H1 (cell line): ENCODE measurements at regions of chr21 and their contacts with region 1.

Region 1: GRCh38 chr21:45309069-45309986 is 21.6 kb upstream of the POFUT2 start:
- DNase-seq: peak; percentile 39 to 95
- H3K4me3 ChIP-seq: no peak overlapping the region
- H3K27ac ChIP-seq: no peak overlapping the region
- H3K4me1 ChIP-seq: peaks cover 0 to 3% (median 1%) of the 10 kb centered on the region in 4 experiments; a peak in 4 of 7 replicates
- H3K27me3 ChIP-seq: peaks cover 0 to 3% (median 0%) of the 10 kb centered on the region in 4 experiments; a peak in 3 of 7 replicates
- CTCF ChIP-seq: peak in 2 of 3 experiments; percentile 85 to 90; a peak in 3 of 4 replicates
- EP300 ChIP-seq: no peak
- POLR2A ChIP-seq: no peak
- RAD21 ChIP-seq: peak; percentile 65 to 71

Region 2: DNA sequence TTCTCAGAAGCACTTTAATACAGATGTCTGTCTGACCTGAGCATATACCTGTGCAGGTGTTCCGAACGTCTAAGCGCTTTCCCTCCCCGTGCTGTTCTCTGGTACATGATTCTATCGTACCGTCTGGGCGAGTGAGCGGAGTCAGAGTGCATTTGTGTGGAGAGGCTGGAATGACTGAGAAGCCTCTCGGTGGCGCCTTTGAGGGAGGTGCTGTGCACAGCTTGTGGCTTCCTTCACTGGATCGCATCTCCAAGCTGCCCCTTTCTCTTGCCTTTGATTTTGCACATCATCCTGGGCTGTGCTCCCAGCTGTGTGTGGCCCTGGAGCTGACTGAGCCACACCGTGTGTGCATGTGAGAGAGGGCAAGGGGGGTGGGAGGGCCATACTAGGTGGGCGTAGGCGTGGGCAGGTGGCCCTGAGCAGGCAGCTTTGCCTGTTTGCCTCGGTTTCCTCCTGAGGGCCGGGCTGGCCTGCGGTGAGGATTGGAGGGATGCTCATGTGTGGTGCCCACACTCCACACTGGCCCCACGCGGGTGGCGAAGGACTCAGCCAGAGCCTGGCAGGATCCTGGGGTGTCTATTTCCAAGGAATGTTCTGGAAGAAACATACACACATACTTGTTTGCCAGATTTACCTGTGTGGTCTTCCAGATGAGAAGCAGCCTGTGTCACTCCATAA is 129.6 kb before region 1 on chr21:
- CTCF ChIA-PET with region 1: no interaction called
- POLR2A ChIA-PET with region 1: no interaction called
- DNase-seq: no peak
- H3K4me3 ChIP-seq: no peak overlapping the region
- H3K27ac ChIP-seq: no peak overlapping the region
- H3K4me1 ChIP-seq: peaks cover 0 to 3% (median 0%) of the 10 kb centered on the region in 4 experiments; a peak in 1 of 7 replicates
- H3K27me3 ChIP-seq: no peaks in the 10 kb centered on the region
- CTCF ChIP-seq: no peak
- EP300 ChIP-seq: no peak
- POLR2A ChIP-seq: no peak
- RAD21 ChIP-seq: no peak

Region 3: DNA sequence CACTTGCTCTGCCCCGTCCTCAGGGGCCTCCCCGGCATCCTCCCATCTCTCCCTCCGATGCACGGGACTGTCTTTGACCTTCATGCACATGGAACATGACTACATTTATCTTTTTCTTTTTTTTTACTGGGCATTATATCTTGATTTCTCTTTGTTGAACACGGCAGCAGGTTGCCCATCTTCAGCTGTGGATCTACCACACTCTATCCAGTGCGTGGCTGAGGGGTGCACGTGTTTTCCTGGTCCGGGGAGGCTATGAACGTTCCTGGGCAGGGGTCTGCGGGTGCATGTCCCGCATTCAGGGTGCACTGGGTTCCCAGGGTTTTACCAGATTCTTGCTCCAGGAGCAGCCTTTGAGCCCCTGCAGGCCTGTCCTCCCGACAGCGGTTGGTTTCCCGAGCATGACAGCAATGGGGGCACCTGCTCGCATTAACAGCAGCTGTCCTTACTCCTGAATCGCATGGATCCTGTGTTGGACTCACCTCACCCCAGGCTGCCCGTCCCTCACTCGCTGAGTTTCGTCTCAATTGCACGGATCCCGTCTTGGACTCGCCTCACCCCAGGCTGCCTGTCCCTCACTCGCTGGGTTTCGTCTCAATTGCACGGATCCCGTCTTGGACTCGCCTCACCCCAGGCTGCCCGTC is 29.0 kb before region 1 on chr21:
- CTCF ChIA-PET with region 1: no interaction called
- POLR2A ChIA-PET with region 1: no interaction called
- DNase-seq: no peak
- H3K4me3 ChIP-seq: no peak overlapping the region
- H3K27ac ChIP-seq: no peak overlapping the region
- H3K4me1 ChIP-seq: no peaks in the 10 kb centered on the region
- H3K27me3 ChIP-seq: no peaks in the 10 kb centered on the region
- CTCF ChIP-seq: no peak
- EP300 ChIP-seq: no peak
- POLR2A ChIP-seq: no peak
- RAD21 ChIP-seq: no peak

Region 4: GRCh38 chr21:45319461-45320211 is 10.3 kb after region 1 on chr21:
- CTCF ChIA-PET with region 1: interaction called, 27 read pairs
- POLR2A ChIA-PET with region 1: interaction called, 3 read pairs
- DNase-seq: no peak
- H3K4me3 ChIP-seq: no peak overlapping the region
- H3K27ac ChIP-seq: no peak overlapping the region
- H3K4me1 ChIP-seq: peaks cover 0 to 20% (median 13%) of the 10 kb centered on the region in 4 experiments; a peak in 6 of 7 replicates
- H3K27me3 ChIP-seq: no peaks in the 10 kb centered on the region
- CTCF ChIP-seq: peak in 2 of 3 experiments; percentile 1 to 5; a peak in 2 of 4 replicates
- EP300 ChIP-seq: no peak
- POLR2A ChIP-seq: no peak
- RAD21 ChIP-seq: peak in 1 of 2 experiments; percentile 33; a peak in 2 of 4 replicates

Region 5: DNA sequence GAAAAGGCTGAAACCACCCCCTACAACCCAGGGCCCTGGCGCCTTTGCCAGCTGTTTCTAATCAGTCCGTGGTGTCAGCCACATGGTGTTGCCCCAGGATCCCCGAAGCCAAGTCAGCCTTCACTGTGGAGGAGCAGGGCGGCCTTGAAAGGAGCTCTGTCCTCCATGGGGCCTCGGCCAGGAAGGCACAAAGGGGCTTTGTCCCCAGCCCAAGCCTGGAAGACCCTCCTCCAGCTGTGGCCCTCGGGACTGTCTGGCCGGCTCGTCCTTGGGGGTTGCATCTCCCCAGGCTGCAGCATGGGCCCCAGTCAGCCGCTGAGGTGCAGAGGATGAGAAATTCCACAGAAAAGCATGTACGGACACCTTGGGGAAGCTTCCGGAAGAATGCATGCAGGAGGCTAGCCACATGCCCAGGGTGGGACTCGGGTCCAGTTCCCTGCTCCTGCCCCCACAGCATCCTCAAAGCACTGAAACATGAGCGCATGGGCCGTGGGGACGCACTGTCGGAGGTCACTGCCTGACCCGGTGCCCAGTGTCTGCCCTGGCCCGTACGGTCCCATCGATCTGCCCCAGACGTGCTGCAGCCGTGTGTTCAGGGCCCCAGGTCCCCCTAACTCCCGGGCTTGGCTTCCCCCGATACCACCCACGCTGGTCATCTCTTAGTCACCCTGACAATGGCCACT is 17.0 kb after region 1 on chr21:
- CTCF ChIA-PET with region 1: interaction called, 27 read pairs
- POLR2A ChIA-PET with region 1: interaction called, 3 read pairs
- DNase-seq: no peak
- H3K4me3 ChIP-seq: no peak overlapping the region
- H3K27ac ChIP-seq: no peak overlapping the region
- H3K4me1 ChIP-seq: peaks cover 0 to 21% (median 18%) of the 10 kb centered on the region in 4 experiments; a peak in 6 of 7 replicates
- H3K27me3 ChIP-seq: no peaks in the 10 kb centered on the region; a peak in 1 of 7 replicates
- CTCF ChIP-seq: no peak
- EP300 ChIP-seq: no peak
- POLR2A ChIP-seq: no peak
- RAD21 ChIP-seq: no peak